HCT116 (cell line): ENCODE measurements at regions of chr5 and their contacts with region 1.

Region 1: GRCh38 chr5:33936004-33936380 is 194 bp upstream of the RXFP3 start:
- DNase-seq: no peak
- ATAC-seq: no peak
- H3K4me3 ChIP-seq: no peak overlapping the region
- H3K27ac ChIP-seq: no peak overlapping the region
- H3K4me1 ChIP-seq: no peaks in the 10 kb centered on the region
- H3K27me3 ChIP-seq: peaks cover 34% of the 10 kb centered on the region
- CTCF ChIP-seq: no peak
- POLR2A ChIP-seq: no peak
- RAD21 ChIP-seq: no peak

Region 2: DNA sequence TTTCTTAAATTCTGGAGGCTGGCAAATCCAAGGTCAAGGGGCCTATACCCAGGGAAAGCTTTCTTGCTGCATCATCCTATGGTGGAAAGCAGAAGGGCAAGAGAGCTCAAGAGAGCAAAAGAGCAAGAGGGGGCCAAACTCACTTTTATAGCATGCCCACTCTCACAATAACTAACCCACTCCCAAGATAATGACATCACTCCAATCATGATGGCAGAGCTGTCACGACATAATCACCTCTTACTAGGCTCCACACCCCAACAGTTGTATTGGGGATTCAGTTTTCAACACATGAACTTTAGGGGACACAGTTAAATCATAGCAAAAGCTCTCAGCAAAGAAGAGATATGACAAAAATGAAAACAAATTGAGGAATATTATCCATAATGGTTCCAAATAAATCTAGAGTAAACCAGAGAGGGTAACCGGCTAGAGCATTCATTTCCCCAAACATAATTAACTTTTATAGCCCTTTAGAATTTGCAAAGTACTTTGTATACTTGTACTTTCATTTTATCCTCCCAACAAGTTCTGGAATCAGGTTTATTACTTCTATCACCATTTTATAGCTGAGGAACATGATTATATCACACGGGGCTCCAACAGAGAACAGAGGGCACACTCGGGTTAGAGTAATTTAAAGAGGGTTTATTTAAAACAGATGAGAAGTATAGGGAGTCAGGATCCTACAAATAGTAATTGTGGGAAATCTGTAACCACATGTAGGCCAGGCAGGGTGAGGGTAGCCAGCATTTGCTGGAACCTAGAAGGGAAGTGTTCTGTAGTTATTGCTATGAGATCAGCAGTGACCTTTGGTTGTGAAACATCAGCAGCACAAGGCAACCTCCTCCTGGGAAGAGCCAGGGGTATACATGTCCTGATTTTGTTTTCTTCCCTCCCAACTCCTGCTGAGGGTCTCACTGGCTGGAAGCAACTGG is 502.4 kb before region 1 on chr5:
- CTCF ChIA-PET with region 1: interaction called, 30 read pairs
- POLR2A ChIA-PET with region 1: no interaction called
- RAD21 ChIA-PET with region 1: interaction called in 1 of 2 experiments, 3 read pairs
- intact Hi-C with region 1: loop called (anchors 1 kb)
- DNase-seq: no peak
- ATAC-seq: no peak
- H3K4me3 ChIP-seq: no peak overlapping the region
- H3K27ac ChIP-seq: no peak overlapping the region
- H3K4me1 ChIP-seq: 0 out of 4 replicates have a peak, but pooled peaks cover 0 to under 1% of the 10 kb centered on the region in 2 experiments
- H3K27me3 ChIP-seq: no peaks in the 10 kb centered on the region
- CTCF ChIP-seq: no peak
- POLR2A ChIP-seq: no peak
- RAD21 ChIP-seq: no peak

Region 3: DNA sequence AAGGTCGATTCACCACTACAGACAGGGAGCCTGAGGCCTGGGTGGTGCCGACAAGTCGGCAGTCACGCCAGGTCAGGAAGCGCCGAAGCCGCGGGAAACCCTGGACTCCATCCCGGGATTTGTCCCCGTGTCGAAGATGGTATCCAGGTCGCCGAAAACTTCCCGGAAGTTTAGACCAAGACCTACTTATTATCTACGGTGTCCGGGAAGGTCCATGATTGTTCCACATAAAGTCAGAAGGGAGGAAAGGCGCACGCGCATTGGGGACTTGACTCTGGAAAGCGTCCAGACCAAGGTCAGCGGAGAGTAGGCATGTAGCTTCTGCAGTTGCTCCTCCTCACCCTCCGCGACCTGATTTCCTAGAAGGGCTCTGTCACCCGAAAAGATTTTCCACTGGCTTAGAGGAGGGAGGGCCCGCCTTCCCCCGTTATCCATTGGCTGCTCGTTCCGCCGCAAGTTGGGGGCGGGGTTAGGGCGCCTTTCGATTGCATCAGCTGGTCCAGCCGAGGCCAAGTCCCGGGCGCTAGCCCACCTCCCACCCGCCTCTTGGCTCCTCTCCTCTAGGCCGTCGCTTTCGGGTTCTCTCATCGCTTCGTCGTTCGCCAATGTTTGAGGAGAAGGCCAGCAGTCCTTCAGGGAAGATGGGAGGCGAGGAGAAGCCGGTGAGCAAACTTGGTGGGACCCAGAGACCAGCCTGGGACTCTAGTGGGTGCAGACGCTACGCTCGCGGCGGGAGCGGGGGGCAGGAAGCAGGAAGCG is 495.3 kb before region 1 on chr5 and contains the start of gene TARS1:
- CTCF ChIA-PET with region 1: interaction called, 30 read pairs
- POLR2A ChIA-PET with region 1: no interaction called
- RAD21 ChIA-PET with region 1: interaction called in 1 of 2 experiments, 3 read pairs
- intact Hi-C with region 1: loop called (anchors 1 kb)
- DNase-seq: peak; percentile 100
- ATAC-seq: peak; percentile 97
- H3K4me3 ChIP-seq: peak within 1 kb of the TSS; percentile 76 to 97
- H3K27ac ChIP-seq: peak within 1 kb of the TSS; percentile 92
- H3K4me1 ChIP-seq: peaks cover 13 to 22% of the 10 kb centered on the region in 2 experiments; a peak in 3 of 4 replicates
- H3K27me3 ChIP-seq: no peaks in the 10 kb centered on the region
- CTCF ChIP-seq: no peak
- POLR2A ChIP-seq: peak; percentile 46
- RAD21 ChIP-seq: no peak
- total RNA-seq, gene TARS1: 291 TPM

Region 4: GRCh38 chr5:33470544-33470943 is 465.4 kb before region 1 on chr5:
- CTCF ChIA-PET with region 1: no interaction called
- POLR2A ChIA-PET with region 1: no interaction called
- RAD21 ChIA-PET with region 1: no interaction called
- intact Hi-C with region 1: loop called (anchors 1 kb)
- DNase-seq: peak; percentile 6
- ATAC-seq: peak; percentile 89
- H3K4me3 ChIP-seq: no peak overlapping the region
- H3K27ac ChIP-seq: no peak overlapping the region
- H3K4me1 ChIP-seq: no peaks in the 10 kb centered on the region
- H3K27me3 ChIP-seq: no peaks in the 10 kb centered on the region
- CTCF ChIP-seq: peak in 1 of 3 experiments; percentile 42; a peak in 3 of 6 replicates
- POLR2A ChIP-seq: no peak
- RAD21 ChIP-seq: peak; percentile 45; the same call in 1 of the 2 replicates

Region 5: GRCh38 chr5:33588654-33589372 is 347.2 kb before region 1 on chr5:
- CTCF ChIA-PET with region 1: interaction called, 24 read pairs
- POLR2A ChIA-PET with region 1: interaction called, 3 read pairs
- RAD21 ChIA-PET with region 1: no interaction called
- intact Hi-C with region 1: no loop called
- DNase-seq: peak; percentile 47
- ATAC-seq: peak; percentile 100
- H3K4me3 ChIP-seq: no peak overlapping the region
- H3K27ac ChIP-seq: no peak overlapping the region
- H3K4me1 ChIP-seq: no peaks in the 10 kb centered on the region
- H3K27me3 ChIP-seq: peaks cover 8% of the 10 kb centered on the region
- CTCF ChIP-seq: peak; percentile 24 to 93 (median 92); a peak in 4 of 6 replicates
- POLR2A ChIP-seq: no peak
- RAD21 ChIP-seq: peak; percentile 51

Region 6: DNA sequence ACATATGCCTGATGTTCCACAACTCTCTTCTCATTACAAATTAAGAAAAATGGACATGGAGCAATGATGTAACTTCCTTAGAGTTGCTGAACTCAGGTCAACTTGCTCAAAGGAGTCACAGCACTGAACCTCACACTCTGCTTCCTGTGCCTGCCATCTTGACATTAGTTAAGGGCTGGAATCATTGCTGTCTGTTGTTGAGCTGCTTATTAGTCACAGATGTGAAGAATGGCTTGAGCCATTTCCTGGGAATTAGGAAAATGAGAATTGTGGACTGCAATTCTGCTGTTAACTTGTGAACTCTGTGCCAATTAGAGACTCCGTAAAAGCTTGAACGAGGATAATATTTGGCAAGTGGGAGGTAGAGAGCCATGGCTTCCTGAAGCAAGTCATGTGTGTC is 256.2 kb before region 1 on chr5:
- CTCF ChIA-PET with region 1: no interaction called
- POLR2A ChIA-PET with region 1: no interaction called
- RAD21 ChIA-PET with region 1: no interaction called
- intact Hi-C with region 1: no loop called
- DNase-seq: no peak
- ATAC-seq: no peak
- H3K4me3 ChIP-seq: no peak overlapping the region
- H3K27ac ChIP-seq: no peak overlapping the region
- H3K4me1 ChIP-seq: no peaks in the 10 kb centered on the region
- H3K27me3 ChIP-seq: peaks cover 26% of the 10 kb centered on the region
- CTCF ChIP-seq: no peak
- POLR2A ChIP-seq: no peak
- RAD21 ChIP-seq: no peak

Region 7: DNA sequence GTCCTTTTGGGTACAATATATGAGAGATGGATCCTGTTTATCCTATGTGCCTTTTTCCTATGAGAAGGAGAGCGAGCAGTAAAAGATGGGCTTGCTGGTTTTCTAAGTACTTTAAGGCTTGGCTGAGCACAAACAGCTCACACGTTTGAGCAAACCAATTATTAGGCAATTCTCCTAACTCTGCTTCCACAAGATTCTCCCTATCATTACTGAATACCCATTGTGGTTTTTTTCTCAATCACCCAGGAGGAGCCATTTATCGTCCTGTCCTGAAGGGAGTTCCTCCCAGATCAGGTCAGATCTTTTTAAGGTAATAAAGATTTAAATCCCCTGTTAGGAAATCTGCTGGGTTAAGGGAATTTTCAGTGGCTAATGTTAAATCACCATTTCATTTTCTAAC is 126.4 kb after region 1 on chr5:
- CTCF ChIA-PET with region 1: no interaction called
- POLR2A ChIA-PET with region 1: no interaction called
- RAD21 ChIA-PET with region 1: no interaction called
- intact Hi-C with region 1: no loop called
- DNase-seq: no peak
- ATAC-seq: no peak
- H3K4me3 ChIP-seq: no peak overlapping the region
- H3K27ac ChIP-seq: no peak overlapping the region
- H3K4me1 ChIP-seq: no peaks in the 10 kb centered on the region
- H3K27me3 ChIP-seq: no peaks in the 10 kb centered on the region
- CTCF ChIP-seq: no peak
- POLR2A ChIP-seq: no peak
- RAD21 ChIP-seq: no peak